Activated naive CD4-positive, alpha-beta T cell treated with anti-CD3 and anti-CD28 coated beads for 36 hours (primary cell): ENCODE measurements at regions of chr9 and their contacts with region 1.

Region 1: DNA sequence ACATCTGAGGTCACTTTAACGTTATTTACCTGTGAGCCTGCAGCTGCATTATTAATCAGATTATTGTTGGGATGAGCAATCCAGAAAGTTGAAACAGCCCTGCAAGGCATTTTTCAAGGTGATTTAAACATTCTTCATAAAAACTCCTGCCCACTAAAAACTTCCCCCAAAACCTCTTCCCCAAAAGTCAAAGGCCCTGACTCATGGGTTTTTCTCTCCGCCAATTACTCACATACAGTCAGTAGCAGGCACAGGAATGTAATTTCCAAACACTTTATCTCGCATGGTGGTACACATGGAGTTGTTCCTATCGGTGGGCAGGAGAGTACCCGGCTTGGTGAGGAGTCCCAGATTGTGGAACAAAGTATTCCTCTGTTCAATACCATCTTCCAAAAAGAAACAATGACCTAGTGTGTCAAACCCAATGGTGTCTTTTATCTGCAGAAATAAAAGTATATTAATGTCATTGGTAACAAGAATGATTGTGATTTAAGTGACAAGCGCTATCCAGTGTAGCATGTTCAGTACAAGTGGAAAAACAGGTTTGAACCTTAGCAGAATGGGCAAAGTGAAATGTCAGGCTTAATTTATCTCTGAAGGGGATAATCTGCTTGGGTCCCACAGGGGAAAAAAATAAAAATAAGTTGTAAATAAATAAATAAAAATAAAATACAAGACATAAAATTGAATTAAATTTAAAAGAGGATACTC is 38.3 kb downstream of the CEMIP2 start:
- DNase-seq: no peak
- H3K4me3 Mint-ChIP-seq: no peak overlapping the region
- H3K27ac Mint-ChIP-seq: no peak overlapping the region
- H3K4me1 Mint-ChIP-seq: peaks cover 9% of the 10 kb centered on the region
- H3K27me3 Mint-ChIP-seq: no peaks in the 10 kb centered on the region

Region 2: GRCh38 chr9:71694943-71695342 is 35.0 kb before region 1 on chr9:
- CTCF ChIA-PET with region 1: no interaction called
- intact Hi-C with region 1: loop called (anchors 5 kb)
- DNase-seq: no peak
- H3K4me3 Mint-ChIP-seq: no peak overlapping the region
- H3K27ac Mint-ChIP-seq: peak overlapping the region; percentile 5
- H3K4me1 Mint-ChIP-seq: peaks cover 6% of the 10 kb centered on the region
- H3K27me3 Mint-ChIP-seq: no peaks in the 10 kb centered on the region

Region 3: GRCh38 chr9:71758785-71759184 is 28.8 kb after region 1 on chr9:
- CTCF ChIA-PET with region 1: no interaction called
- intact Hi-C with region 1: loop called (anchors 2 kb)
- DNase-seq: no peak
- H3K4me3 Mint-ChIP-seq: no peak overlapping the region
- H3K27ac Mint-ChIP-seq: no peak overlapping the region
- H3K4me1 Mint-ChIP-seq: peaks cover 78% of the 10 kb centered on the region
- H3K27me3 Mint-ChIP-seq: no peaks in the 10 kb centered on the region